Vagina (tissue), 2 donors: ENCODE measurements at regions of chr12 and their contacts with region 1.

Region 1: GRCh38 chr12:106195621-106196027 is 52.2 kb downstream of the CKAP4 start:
- DNase-seq: no peak
- H3K4me3 ChIP-seq: no peak overlapping the region
- H3K27ac ChIP-seq: peak overlapping the region; percentile 66
- H3K4me1 ChIP-seq: peaks cover 16% of the 10 kb centered on the region
- H3K27me3 ChIP-seq: no peaks in the 10 kb centered on the region
- CTCF ChIP-seq: no peak
- POLR2A ChIP-seq: no peak

Region 2: GRCh38 chr12:104411826-104412641 is 1783.6 kb before region 1 on chr12:
- intact Hi-C with region 1: no loop called
- DNase-seq: no peak
- H3K4me3 ChIP-seq: no peak overlapping the region
- H3K27ac ChIP-seq: no peak overlapping the region
- H3K4me1 ChIP-seq: no peaks in the 10 kb centered on the region
- H3K27me3 ChIP-seq: no peaks in the 10 kb centered on the region
- CTCF ChIP-seq: no peak
- POLR2A ChIP-seq: no peak

Region 3: GRCh38 chr12:104718304-104718976 is 1477.2 kb before region 1 on chr12:
- intact Hi-C with region 1: loop called (anchors 5 kb)
- DNase-seq: no peak
- H3K4me3 ChIP-seq: no peak overlapping the region
- H3K27ac ChIP-seq: no peak overlapping the region
- H3K4me1 ChIP-seq: peaks cover 21% of the 10 kb centered on the region
- H3K27me3 ChIP-seq: no peaks in the 10 kb centered on the region
- CTCF ChIP-seq: no peak
- POLR2A ChIP-seq: no peak